ENCODE measurements at regions of chr6 and their contacts with region 1.

Region 1: DNA sequence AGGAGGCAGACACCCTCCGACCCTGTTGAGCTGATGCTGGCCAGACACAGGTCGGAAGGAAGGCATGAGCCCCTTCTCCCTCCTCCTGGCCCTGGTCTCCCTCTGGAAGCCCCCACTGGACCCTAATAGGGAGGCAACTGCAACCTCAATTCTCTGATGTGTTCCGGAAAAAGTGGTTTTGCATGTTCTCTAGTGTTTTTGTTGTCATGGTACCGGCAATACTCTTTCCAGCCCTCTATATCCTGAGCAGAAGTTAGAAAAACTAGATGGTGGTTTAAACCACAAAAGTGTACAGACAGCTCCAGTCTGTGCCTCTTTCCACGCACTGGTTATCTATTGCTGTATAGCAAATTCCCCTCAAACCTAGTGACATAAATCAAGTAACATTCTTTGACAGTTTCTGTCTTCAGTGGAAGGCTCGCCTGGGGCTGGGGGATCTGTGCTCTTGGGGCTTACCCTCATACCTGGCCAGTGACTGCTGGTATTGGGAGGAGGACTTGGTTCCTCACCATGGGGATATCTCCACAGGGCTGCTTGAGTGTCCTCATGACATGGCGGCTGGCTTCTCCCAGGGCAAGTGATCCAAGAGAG is 37.0 kb downstream of the SYTL3 start:
- DNase-seq: peak in 33 of 35 experiments; percentile 21 to 89 (median 61)
- ATAC-seq: peak; percentile 82 to 94 (median 93)
- H3K4me3 ChIP-seq: peak overlapping the region; percentile 14 to 29
- H3K4me3 Mint-ChIP-seq: peak overlapping the region; percentile 26 to 73 (median 28)
- H3K27ac ChIP-seq: peak overlapping the region; percentile 94
- H3K27ac Mint-ChIP-seq: peak overlapping the region; percentile 87 to 93
- H3K4me1 ChIP-seq: peaks cover 39 to 53% of the 10 kb centered on the region in 2 experiments
- H3K4me1 Mint-ChIP-seq: peaks cover 67 to 72% (median 70%) of the 10 kb centered on the region in 3 donors
- H3K27me3 ChIP-seq: no peaks in the 10 kb centered on the region
- H3K27me3 Mint-ChIP-seq: no peaks in the 10 kb centered on the region

Region 2: GRCh38 chr6:158213925-158214674 is 472.8 kb before region 1 on chr6:
- CTCF ChIA-PET with region 1: interaction called, 4 to 31 read pairs
- POLR2A ChIA-PET with region 1: no interaction called
- DNase-seq: peak in 30 of 35 experiments; percentile 14 to 79 (median 37)
- ATAC-seq: peak; percentile 93 to 100 (median 99)
- H3K4me3 ChIP-seq: no peak overlapping the region
- H3K4me3 Mint-ChIP-seq: no peak overlapping the region
- H3K27ac ChIP-seq: no peak overlapping the region
- H3K27ac Mint-ChIP-seq: no peak overlapping the region
- H3K4me1 ChIP-seq: peaks cover 0 to 3% of the 10 kb centered on the region in 2 experiments
- H3K4me1 Mint-ChIP-seq: peaks cover under 1 to 8% (median 3%) of the 10 kb centered on the region in 3 donors
- H3K27me3 ChIP-seq: no peaks in the 10 kb centered on the region
- H3K27me3 Mint-ChIP-seq: no peaks in the 10 kb centered on the region

Region 3: GRCh38 chr6:158644231-158645063 is 42.4 kb before region 1 on chr6 and contains the start of gene DYNLT1:
- CTCF ChIA-PET with region 1: interaction called, 4 to 17 read pairs
- POLR2A ChIA-PET with region 1: interaction called, 3 to 28 read pairs
- DNase-seq: peak; percentile 64 to 92 (median 80)
- ATAC-seq: peak; percentile 76 to 89 (median 85)
- H3K4me3 ChIP-seq: peak within 1 kb of the TSS; percentile 81 to 87
- H3K4me3 Mint-ChIP-seq: peak within 1 kb of the TSS; percentile 91 to 99 (median 95)
- H3K27ac ChIP-seq: peak within 1 kb of the TSS; percentile 88
- H3K27ac Mint-ChIP-seq: peak within 1 kb of the TSS; percentile 96 to 97
- H3K4me1 ChIP-seq: peaks cover 16 to 53% of the 10 kb centered on the region in 2 experiments
- H3K4me1 Mint-ChIP-seq: peaks cover 61 to 74% (median 67%) of the 10 kb centered on the region in 3 donors
- H3K27me3 ChIP-seq: no peaks in the 10 kb centered on the region
- H3K27me3 Mint-ChIP-seq: no peaks in the 10 kb centered on the region
- total RNA-seq, gene DYNLT1: 50.8 to 128 (median 59.5) TPM

Region 4: DNA sequence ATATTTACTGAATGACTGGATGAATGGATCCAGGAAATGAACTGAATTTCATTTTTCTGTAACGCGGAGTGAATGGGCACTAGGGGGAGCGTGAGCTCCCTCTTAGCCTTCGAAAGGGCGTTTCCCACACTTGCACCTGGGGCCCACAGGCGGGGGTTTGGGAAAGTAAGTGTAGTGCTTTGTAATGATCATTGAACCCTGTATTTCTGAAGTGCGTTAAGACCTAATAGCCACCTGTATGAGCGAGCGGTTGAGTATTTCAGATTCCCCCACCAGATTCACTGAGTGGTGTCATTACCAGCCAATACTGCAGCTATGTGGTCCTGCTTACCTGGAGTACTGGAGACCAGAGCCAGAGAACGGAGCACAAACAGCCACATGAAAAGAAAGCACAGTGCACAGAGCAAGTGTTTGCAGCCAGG is 26.5 kb before region 1 on chr6:
- CTCF ChIA-PET with region 1: interaction called, 19 to 85 read pairs
- POLR2A ChIA-PET with region 1: interaction called, 4 to 17 read pairs
- DNase-seq: peak in 34 of 35 experiments; percentile 26 to 75 (median 56)
- ATAC-seq: peak; percentile 69 to 78 (median 70)
- H3K4me3 ChIP-seq: no peak overlapping the region
- H3K4me3 Mint-ChIP-seq: peak overlapping the region; percentile 17 to 55 (median 18)
- H3K27ac ChIP-seq: peak overlapping the region; percentile 25
- H3K27ac Mint-ChIP-seq: peak overlapping the region; percentile 20 to 81
- H3K4me1 ChIP-seq: peaks cover 31 to 33% of the 10 kb centered on the region in 2 experiments
- H3K4me1 Mint-ChIP-seq: peaks cover 50 to 59% (median 51%) of the 10 kb centered on the region in 3 donors
- H3K27me3 ChIP-seq: no peaks in the 10 kb centered on the region
- H3K27me3 Mint-ChIP-seq: no peaks in the 10 kb centered on the region

Region 5: GRCh38 chr6:158780988-158781708 is 94.3 kb after region 1 on chr6:
- CTCF ChIA-PET with region 1: no interaction called
- POLR2A ChIA-PET with region 1: interaction called in 1 of 2 experiments, 10 read pairs
- DNase-seq: no peak
- ATAC-seq: no peak
- H3K4me3 ChIP-seq: no peak overlapping the region
- H3K4me3 Mint-ChIP-seq: peak overlapping the region in 1 of 3 donors; percentile 12
- H3K27ac ChIP-seq: no peak overlapping the region
- H3K27ac Mint-ChIP-seq: peak overlapping the region in 1 of 2 donors; percentile 61
- H3K4me1 ChIP-seq: peaks cover 0 to 14% of the 10 kb centered on the region in 2 experiments
- H3K4me1 Mint-ChIP-seq: peaks cover 44 to 58% (median 52%) of the 10 kb centered on the region in 3 donors
- H3K27me3 ChIP-seq: no peaks in the 10 kb centered on the region
- H3K27me3 Mint-ChIP-seq: no peaks in the 10 kb centered on the region

Region 6: DNA sequence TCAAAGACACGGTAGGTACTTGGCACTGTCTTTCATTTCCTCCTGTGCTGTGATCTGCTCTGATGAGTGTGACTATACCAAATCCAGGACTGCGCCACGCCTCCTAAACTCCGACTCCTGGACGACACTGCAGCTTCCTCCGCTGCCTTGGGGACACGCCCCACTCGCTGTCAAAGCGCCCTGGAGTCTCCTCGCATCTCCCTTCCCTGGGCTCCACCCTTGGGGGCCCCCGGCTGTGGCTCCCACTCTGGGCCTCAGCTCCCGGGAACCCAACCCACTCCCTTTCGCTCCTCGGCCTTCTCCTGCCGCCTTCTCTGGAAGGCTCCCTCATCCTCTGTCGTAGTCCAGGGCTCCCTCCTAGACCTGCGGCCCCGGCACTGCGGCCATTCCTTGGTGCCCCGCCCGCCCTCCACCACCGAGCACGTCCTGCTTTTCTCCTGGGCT is 251.9 kb after region 1 on chr6:
- CTCF ChIA-PET with region 1: no interaction called
- POLR2A ChIA-PET with region 1: no interaction called
- DNase-seq: peak in 13 of 35 experiments; percentile 7 to 29 (median 18)
- ATAC-seq: peak; percentile 58 to 83 (median 70)
- H3K4me3 ChIP-seq: peak overlapping the region; percentile 23 to 47
- H3K4me3 Mint-ChIP-seq: peak overlapping the region; percentile 66 to 81 (median 68)
- H3K27ac ChIP-seq: no peak overlapping the region
- H3K27ac Mint-ChIP-seq: no peak overlapping the region
- H3K4me1 ChIP-seq: peaks cover 0 to 13% of the 10 kb centered on the region in 2 experiments
- H3K4me1 Mint-ChIP-seq: peaks cover 12 to 19% (median 13%) of the 10 kb centered on the region in 3 donors
- H3K27me3 ChIP-seq: peaks cover 0 to 10% of the 10 kb centered on the region in 2 experiments
- H3K27me3 Mint-ChIP-seq: peaks cover 4% of the 10 kb centered on the region in 2 donors

Measured in T-cell (primary cell).